Caco-2 (cell line): ENCODE measurements at regions of chr19 and their contacts with region 1.

Region 1: DNA sequence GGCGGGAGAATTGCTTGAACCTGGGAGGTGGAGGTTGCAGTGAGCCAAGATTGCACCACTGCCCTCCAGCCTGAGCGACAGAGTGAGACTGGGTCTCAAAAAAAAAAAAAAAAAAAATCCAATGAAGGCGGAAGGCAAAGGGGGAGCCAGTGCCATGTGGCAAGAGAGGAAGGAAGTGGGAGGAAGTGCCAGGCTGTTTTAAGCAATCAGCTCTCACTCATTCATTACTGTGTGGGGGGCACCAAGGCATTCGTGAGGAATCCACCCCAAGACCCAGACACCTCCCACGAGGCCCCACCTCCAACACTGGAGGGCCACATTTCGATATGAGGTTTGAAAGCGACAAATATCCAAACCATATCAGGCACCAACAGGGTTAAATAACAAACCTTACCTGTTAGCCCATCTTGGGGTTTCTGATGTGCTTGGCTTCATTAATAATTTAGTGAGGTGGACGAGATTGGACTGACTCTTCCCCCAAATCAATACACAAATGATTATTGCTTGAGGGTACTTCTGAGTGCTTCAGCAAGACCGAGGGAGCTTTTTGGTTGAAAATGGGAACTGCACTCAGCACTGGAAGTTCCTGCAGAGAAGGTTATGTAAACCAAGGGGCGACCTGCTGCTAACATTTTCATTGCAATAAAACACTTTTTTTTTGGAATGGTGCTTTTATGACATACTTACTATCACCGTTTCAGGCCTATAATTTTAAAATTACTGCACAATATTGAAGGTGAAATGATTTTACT is 7.5 kb upstream of the LRP3 start:
- DNase-seq: no peak
- H3K4me3 ChIP-seq: no peak overlapping the region
- H3K4me3 Mint-ChIP-seq: no peak overlapping the region
- H3K27ac Mint-ChIP-seq: no peak overlapping the region
- H3K4me1 ChIP-seq: no peaks in the 10 kb centered on the region
- H3K4me1 Mint-ChIP-seq: no peaks in the 10 kb centered on the region
- H3K27me3 ChIP-seq: no peaks in the 10 kb centered on the region
- H3K27me3 Mint-ChIP-seq: peaks cover 5% of the 10 kb centered on the region
- CTCF ChIP-seq: no peak

Region 2: DNA sequence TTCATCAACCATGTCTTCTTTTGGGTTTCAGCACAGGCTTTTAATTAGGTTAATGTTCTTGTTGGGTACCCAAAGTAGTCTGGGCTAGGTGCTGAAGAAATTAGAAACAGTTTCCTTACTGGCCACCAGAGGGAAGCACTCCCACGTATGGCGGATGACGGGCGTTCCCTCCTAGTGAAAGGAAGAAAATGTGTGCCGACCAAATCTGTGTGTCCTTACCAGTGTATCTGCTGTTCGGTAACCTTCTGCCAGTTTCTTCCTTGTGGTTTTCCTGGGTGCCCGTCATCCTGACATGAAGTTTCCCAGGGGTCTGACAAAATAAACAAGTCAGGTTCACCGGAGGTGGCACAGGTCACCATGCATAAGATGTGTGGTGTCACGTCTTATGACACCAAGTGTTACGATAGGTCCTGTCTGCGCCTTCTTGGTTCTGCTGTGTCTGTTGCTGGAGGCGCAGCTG is 60.6 kb before region 1 on chr19:
- CTCF ChIA-PET with region 1: interaction called, 17 read pairs
- POLR2A ChIA-PET with region 1: no interaction called
- intact Hi-C with region 1: loop called (anchors 1 kb)
- DNase-seq: peak in 1 of 2 experiments; percentile 66
- H3K4me3 ChIP-seq: no peak overlapping the region
- H3K4me3 Mint-ChIP-seq: no peak overlapping the region
- H3K27ac Mint-ChIP-seq: no peak overlapping the region
- H3K4me1 ChIP-seq: peaks cover 8% of the 10 kb centered on the region
- H3K4me1 Mint-ChIP-seq: peaks cover 10% of the 10 kb centered on the region
- H3K27me3 ChIP-seq: no peaks in the 10 kb centered on the region
- H3K27me3 Mint-ChIP-seq: no peaks in the 10 kb centered on the region
- CTCF ChIP-seq: peak; percentile 88 to 91

Region 3: GRCh38 chr19:33143897-33144405 is 42.7 kb before region 1 on chr19:
- CTCF ChIA-PET with region 1: interaction called, 20 read pairs
- POLR2A ChIA-PET with region 1: no interaction called
- intact Hi-C with region 1: loop called (anchors 1 kb)
- DNase-seq: peak; percentile 63 to 75
- H3K4me3 ChIP-seq: no peak overlapping the region
- H3K4me3 Mint-ChIP-seq: no peak overlapping the region
- H3K27ac Mint-ChIP-seq: no peak overlapping the region
- H3K4me1 ChIP-seq: peaks cover 17% of the 10 kb centered on the region
- H3K4me1 Mint-ChIP-seq: peaks cover 10% of the 10 kb centered on the region
- H3K27me3 ChIP-seq: no peaks in the 10 kb centered on the region
- H3K27me3 Mint-ChIP-seq: no peaks in the 10 kb centered on the region
- CTCF ChIP-seq: peak; percentile 95 to 96

Region 4: DNA sequence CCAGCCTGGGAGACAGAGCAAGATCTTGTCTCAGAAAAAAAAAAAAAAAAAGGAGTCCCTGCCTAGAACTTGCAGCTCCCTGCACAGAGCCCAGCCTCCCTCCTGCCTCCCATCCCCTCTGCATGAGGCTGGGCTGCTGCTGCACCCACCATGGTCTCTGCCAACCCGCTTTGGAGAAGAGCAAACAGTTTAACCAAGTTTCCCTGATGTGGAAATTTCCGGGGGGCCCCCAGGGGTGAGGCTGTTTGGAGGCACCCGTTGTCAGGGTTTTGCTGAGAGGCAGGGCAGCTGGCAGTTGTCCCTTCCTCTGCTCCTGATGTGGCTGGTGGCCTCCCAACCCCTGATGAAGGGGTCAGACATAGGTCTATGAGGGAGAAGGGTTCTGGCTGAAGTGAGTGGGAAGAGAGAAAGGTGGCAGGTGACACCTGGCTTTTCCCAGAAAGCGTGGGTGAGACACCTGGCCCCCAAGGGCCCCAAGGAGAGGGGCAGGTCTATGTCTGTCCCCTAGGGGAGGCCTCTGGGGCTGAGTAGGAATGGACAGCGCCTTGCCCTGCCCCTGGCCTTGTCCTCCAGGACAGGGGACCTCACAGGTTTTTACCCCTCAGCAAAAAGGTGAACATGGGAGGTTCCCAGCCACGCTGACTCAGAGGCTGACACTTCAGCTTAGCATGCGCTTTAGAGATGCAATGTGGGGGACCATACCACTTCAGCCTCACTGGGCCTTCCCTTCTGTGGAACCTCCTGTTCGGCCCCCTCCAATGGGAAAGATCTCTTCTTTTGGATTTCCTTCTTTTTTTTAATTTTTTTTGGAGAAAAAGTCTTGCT is 13.0 kb after region 1 on chr19:
- CTCF ChIA-PET with region 1: interaction called, 11 read pairs
- POLR2A ChIA-PET with region 1: no interaction called
- intact Hi-C with region 1: no loop called
- DNase-seq: no peak
- H3K4me3 ChIP-seq: no peak overlapping the region
- H3K4me3 Mint-ChIP-seq: no peak overlapping the region
- H3K27ac Mint-ChIP-seq: no peak overlapping the region
- H3K4me1 ChIP-seq: 0 out of 2 replicates have a peak, but pooled peaks cover 8% of the 10 kb centered on the region
- H3K4me1 Mint-ChIP-seq: no peaks in the 10 kb centered on the region
- H3K27me3 ChIP-seq: no peaks in the 10 kb centered on the region
- H3K27me3 Mint-ChIP-seq: no peaks in the 10 kb centered on the region
- CTCF ChIP-seq: no peak